IMR-90 (cell line): ENCODE measurements at regions of chr11 and their contacts with region 1.

Region 1: GRCh38 chr11:10122326-10123197 is 171.5 kb downstream of the SBF2 start:
- DNase-seq: peak; percentile 57
- ATAC-seq: peak; percentile 27
- H3K4me3 ChIP-seq: no peak overlapping the region
- H3K27ac ChIP-seq: no peak overlapping the region
- H3K4me1 ChIP-seq: peaks cover 3% of the 10 kb centered on the region; the same call in 1 of the 2 replicates
- H3K27me3 ChIP-seq: no peaks in the 10 kb centered on the region
- CTCF ChIP-seq: no peak
- POLR2A ChIP-seq: no peak
- RAD21 ChIP-seq: no peak

Region 2: GRCh38 chr11:10109826-10110225 is 12.7 kb before region 1 on chr11:
- CTCF ChIA-PET with region 1: no interaction called
- POLR2A ChIA-PET with region 1: interaction called, 13 read pairs
- dilution Hi-C with region 1: no loop called
- in situ Hi-C with region 1: no loop called
- intact Hi-C with region 1: no loop called
- DNase-seq: peak; percentile 83
- ATAC-seq: peak; percentile 33
- H3K4me3 ChIP-seq: no peak overlapping the region
- H3K27ac ChIP-seq: no peak overlapping the region
- H3K4me1 ChIP-seq: peaks cover 8% of the 10 kb centered on the region; the same call in 1 of the 2 replicates
- H3K27me3 ChIP-seq: no peaks in the 10 kb centered on the region
- CTCF ChIP-seq: no peak
- POLR2A ChIP-seq: no peak
- RAD21 ChIP-seq: no peak